B cell (primary cell): ENCODE measurements at regions of chr6 and their contacts with region 1.

Region 1: GRCh38 chr6:41072676-41073623 is at the start of gene NFYA:
- DNase-seq: peak; percentile 100
- ATAC-seq: peak; percentile 64
- H3K4me3 ChIP-seq: peak within 1 kb of the TSS; percentile 80 to 97 (median 94)
- H3K4me3 Mint-ChIP-seq: peak within 1 kb of the TSS; percentile 94
- H3K27ac ChIP-seq: peak within 1 kb of the TSS; percentile 96 to 97
- H3K27ac Mint-ChIP-seq: peak within 1 kb of the TSS; percentile 99
- H3K4me1 ChIP-seq: peaks cover 31 to 34% of the 10 kb centered on the region in 2 donors
- H3K4me1 Mint-ChIP-seq: peaks cover 45% of the 10 kb centered on the region
- H3K27me3 ChIP-seq: no peaks in the 10 kb centered on the region
- H3K27me3 Mint-ChIP-seq: no peaks in the 10 kb centered on the region
- CTCF ChIP-seq: peak; percentile 67
- total RNA-seq, gene NFYA: 41.6 and 44.3 TPM in 2 replicates

Region 2: DNA sequence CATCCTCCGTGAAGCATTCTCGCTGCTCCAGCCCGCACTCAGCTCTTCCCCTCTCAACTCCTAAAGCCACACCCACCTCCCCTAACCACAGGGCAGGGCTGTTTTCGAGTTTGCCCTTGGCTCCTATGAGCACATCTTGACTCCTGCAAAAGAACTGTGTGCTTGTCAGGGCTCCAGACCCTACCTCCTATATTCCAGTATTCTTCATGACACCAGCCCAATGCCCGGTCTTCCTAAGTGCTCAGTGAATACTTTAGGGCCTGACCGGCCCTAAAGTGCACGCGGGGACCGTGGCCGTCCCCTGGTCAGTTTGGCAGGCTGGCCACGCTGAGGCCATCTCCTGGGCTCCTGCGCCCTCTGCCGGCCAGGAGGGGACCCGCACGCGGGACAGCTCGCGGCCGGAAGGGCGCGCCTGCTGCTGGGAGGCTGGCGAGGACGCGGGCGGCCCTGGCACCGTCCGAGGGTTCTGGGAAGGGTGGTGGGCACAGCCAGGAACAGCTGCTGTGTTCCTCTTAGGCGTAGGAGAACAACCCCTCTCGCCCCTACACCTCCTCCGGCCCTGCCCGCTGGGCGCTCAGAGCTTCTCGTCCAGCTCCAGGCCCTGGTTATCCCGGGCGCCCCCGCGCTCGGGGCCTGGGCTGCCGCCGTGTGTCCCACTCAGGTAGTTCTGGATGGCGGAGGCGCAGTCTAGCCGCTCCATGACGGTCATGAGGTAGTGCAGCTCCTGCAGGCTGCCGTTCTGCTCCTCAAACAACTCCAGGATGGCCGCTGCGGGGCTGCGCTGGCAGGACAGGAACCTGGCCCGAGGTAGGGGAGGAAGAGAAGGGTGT is 44.9 kb before region 1 on chr6:
- CTCF ChIA-PET with region 1: interaction called, 26 read pairs
- POLR2A ChIA-PET with region 1: no interaction called
- intact Hi-C with region 1: no loop called
- DNase-seq: peak; percentile 85
- ATAC-seq: peak; percentile 89
- H3K4me3 ChIP-seq: peak overlapping the region; percentile 4 to 73 (median 66)
- H3K4me3 Mint-ChIP-seq: peak overlapping the region; percentile 88
- H3K27ac ChIP-seq: peak overlapping the region in 1 of 2 donors; percentile 63
- H3K27ac Mint-ChIP-seq: peak overlapping the region; percentile 55
- H3K4me1 ChIP-seq: peaks cover 20 to 23% of the 10 kb centered on the region in 2 donors
- H3K4me1 Mint-ChIP-seq: peaks cover 24% of the 10 kb centered on the region
- H3K27me3 ChIP-seq: no peaks in the 10 kb centered on the region
- H3K27me3 Mint-ChIP-seq: no peaks in the 10 kb centered on the region
- CTCF ChIP-seq: peak; percentile 100

Region 3: GRCh38 chr6:41278699-41279405 is 205.9 kb after region 1 on chr6:
- CTCF ChIA-PET with region 1: interaction called, 5 read pairs
- POLR2A ChIA-PET with region 1: no interaction called
- intact Hi-C with region 1: loop called (anchors 10 kb)
- DNase-seq: peak; percentile 84
- ATAC-seq: peak; percentile 66
- H3K4me3 ChIP-seq: no peak overlapping the region
- H3K4me3 Mint-ChIP-seq: peak overlapping the region; percentile 21
- H3K27ac ChIP-seq: no peak overlapping the region
- H3K27ac Mint-ChIP-seq: peak overlapping the region; percentile 35
- H3K4me1 ChIP-seq: peaks cover 29 to 44% of the 10 kb centered on the region in 2 donors
- H3K4me1 Mint-ChIP-seq: peaks cover 43% of the 10 kb centered on the region
- H3K27me3 ChIP-seq: no peaks in the 10 kb centered on the region
- H3K27me3 Mint-ChIP-seq: peaks cover 5% of the 10 kb centered on the region
- CTCF ChIP-seq: peak; percentile 79

Region 4: GRCh38 chr6:41545703-41546474 is 472.9 kb after region 1 on chr6 and contains the start of gene FOXP4:
- CTCF ChIA-PET with region 1: no interaction called
- POLR2A ChIA-PET with region 1: no interaction called
- intact Hi-C with region 1: loop called (anchors 5 kb)
- DNase-seq: peak; percentile 91
- ATAC-seq: peak; percentile 84
- H3K4me3 ChIP-seq: peak within 1 kb of the TSS; percentile 35 to 75 (median 70)
- H3K4me3 Mint-ChIP-seq: peak within 1 kb of the TSS; percentile 95
- H3K27ac ChIP-seq: peak within 1 kb of the TSS; percentile 11 to 32
- H3K27ac Mint-ChIP-seq: peak within 1 kb of the TSS; percentile 91
- H3K4me1 ChIP-seq: peaks cover 25 to 39% of the 10 kb centered on the region in 2 donors
- H3K4me1 Mint-ChIP-seq: peaks cover 33% of the 10 kb centered on the region
- H3K27me3 ChIP-seq: peaks cover 0 to 3% (median 0%) of the 10 kb centered on the region in 4 experiments
- H3K27me3 Mint-ChIP-seq: no peaks in the 10 kb centered on the region
- CTCF ChIP-seq: no peak
- total RNA-seq, gene FOXP4: 37.5 and 38.7 TPM in 2 replicates

Region 5: GRCh38 chr6:41920921-41921711 is 848.2 kb after region 1 on chr6 and contains the starts of genes BYSL and MED20:
- CTCF ChIA-PET with region 1: no interaction called
- POLR2A ChIA-PET with region 1: no interaction called
- intact Hi-C with region 1: loop called (anchors 2 kb)
- DNase-seq: peak; percentile 98
- ATAC-seq: peak; percentile 93
- H3K4me3 ChIP-seq: peak within 1 kb of the TSS; percentile 67 to 99 (median 97)
- H3K4me3 Mint-ChIP-seq: peak within 1 kb of the TSS; percentile 98
- H3K27ac ChIP-seq: peak within 1 kb of the TSS; percentile 91 to 96
- H3K27ac Mint-ChIP-seq: peak within 1 kb of the TSS; percentile 98
- H3K4me1 ChIP-seq: peaks cover 26 to 29% of the 10 kb centered on the region in 2 donors
- H3K4me1 Mint-ChIP-seq: peaks cover 47% of the 10 kb centered on the region
- H3K27me3 ChIP-seq: no peaks in the 10 kb centered on the region
- H3K27me3 Mint-ChIP-seq: no peaks in the 10 kb centered on the region
- CTCF ChIP-seq: peak; percentile 93
- total RNA-seq, gene BYSL: 10.5 and 11.1 TPM in 2 replicates
- total RNA-seq, gene MED20: 18.2 and 24.2 TPM in 2 replicates

Region 6: GRCh38 chr6:42563697-42564505 is 1491.0 kb after region 1 on chr6 and contains the start of gene UBR2:
- CTCF ChIA-PET with region 1: no interaction called
- POLR2A ChIA-PET with region 1: no interaction called
- intact Hi-C with region 1: loop called (anchors 10 kb)
- DNase-seq: peak; percentile 95
- ATAC-seq: peak; percentile 96
- H3K4me3 ChIP-seq: peak within 1 kb of the TSS; percentile 78 to 98 (median 91)
- H3K4me3 Mint-ChIP-seq: peak within 1 kb of the TSS; percentile 98
- H3K27ac ChIP-seq: peak within 1 kb of the TSS; percentile 90 to 91
- H3K27ac Mint-ChIP-seq: peak within 1 kb of the TSS; percentile 98
- H3K4me1 ChIP-seq: peaks cover 19 to 25% of the 10 kb centered on the region in 2 donors
- H3K4me1 Mint-ChIP-seq: peaks cover 36% of the 10 kb centered on the region
- H3K27me3 ChIP-seq: no peaks in the 10 kb centered on the region
- H3K27me3 Mint-ChIP-seq: no peaks in the 10 kb centered on the region
- CTCF ChIP-seq: peak; percentile 41
- total RNA-seq, gene UBR2: 56.2 and 61.5 TPM in 2 replicates